WTC11 (cell line): ENCODE measurements at regions of chr12 and their contacts with region 1.

Region 1: DNA sequence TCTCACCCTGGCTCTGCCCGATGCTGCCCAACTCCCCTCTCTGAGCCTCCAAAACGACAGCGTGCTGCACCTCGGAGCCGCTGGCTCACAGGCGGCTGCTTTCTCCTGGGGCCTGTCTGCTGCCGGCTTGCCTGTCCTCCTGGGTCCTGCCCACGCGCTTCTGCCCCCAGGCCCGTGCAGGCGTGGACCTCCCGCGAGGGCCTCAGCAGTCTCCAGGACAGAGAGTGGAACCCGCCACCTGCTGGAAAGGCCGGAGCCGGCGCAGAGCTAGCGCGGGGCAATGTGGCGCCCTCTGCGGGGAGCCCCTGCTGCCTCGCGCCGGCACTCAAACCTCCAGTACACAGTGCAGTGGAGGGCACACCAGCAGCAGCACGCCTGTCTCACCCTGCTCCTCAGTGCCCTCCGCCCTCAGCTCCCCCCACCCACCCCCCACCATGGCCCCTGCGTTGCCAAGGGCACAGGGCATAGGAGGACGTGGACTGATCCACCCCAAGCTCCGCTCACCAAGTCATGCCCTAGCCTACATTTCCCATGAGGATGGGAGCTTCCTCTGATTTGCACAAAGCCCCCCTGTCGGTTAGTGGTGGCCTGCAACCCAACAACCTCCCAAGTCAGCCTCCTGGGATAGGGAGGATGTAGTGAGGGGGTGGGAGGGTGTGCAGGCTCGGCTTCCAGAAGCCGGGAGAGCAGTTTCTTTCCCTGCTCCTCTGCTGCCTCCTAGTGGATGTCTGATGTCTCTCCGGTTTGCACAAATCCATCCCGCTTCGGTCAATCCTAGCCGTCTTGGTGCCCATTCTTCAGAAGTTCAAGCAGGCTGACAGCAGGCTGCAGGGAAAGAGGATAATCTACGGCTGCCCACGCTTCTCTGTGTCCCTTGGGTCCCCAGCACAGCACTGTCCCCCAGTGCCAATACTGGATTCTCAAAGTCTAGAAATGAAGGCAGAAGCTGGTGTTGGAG is 25.2 kb downstream of the KRT8 start:
- DNase-seq: peak; percentile 86
- ATAC-seq: peak; percentile 80
- H3K4me3 Mint-ChIP-seq: peak overlapping the region; percentile 74
- H3K27ac Mint-ChIP-seq: 0 out of 2 replicates have a peak overlapping the region, but pooled peaks have one; percentile 60
- H3K4me1 Mint-ChIP-seq: peaks cover 14% of the 10 kb centered on the region
- H3K27me3 Mint-ChIP-seq: peaks cover 12% of the 10 kb centered on the region
- CTCF ChIP-seq: peak; percentile 86

Region 2: GRCh38 chr12:52156736-52157565 is 722.7 kb before region 1 on chr12:
- CTCF ChIA-PET with region 1: interaction called, 11 read pairs
- POLR2A ChIA-PET with region 1: no interaction called
- DNase-seq: peak; percentile 94
- ATAC-seq: peak; percentile 88
- H3K4me3 Mint-ChIP-seq: no peak overlapping the region
- H3K27ac Mint-ChIP-seq: no peak overlapping the region
- H3K4me1 Mint-ChIP-seq: no peaks in the 10 kb centered on the region
- H3K27me3 Mint-ChIP-seq: no peaks in the 10 kb centered on the region
- CTCF ChIP-seq: peak; percentile 97

Region 3: DNA sequence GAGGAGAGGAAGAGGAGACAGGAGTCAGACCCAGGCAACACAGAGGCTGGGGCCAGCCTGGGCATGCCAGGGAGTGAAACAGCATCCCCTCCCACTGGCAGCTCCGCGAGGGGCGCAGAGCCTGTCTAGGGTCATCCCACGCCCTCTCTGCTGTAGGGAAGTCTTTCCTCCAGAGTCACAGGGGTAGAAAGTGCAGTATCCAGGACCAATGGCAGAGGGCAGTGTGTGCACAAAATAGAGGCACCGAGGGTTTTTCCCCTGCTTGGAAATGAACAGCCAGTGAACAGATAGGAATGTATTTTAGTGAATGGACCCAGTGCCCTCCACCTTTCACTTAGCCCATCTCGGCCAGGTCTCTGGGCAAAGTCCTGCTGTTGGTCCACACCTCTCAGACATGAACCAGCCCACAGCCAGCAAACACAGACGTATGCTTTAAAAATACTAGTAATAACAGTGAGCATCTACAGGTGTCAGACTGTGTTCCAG is 296.7 kb before region 1 on chr12:
- CTCF ChIA-PET with region 1: interaction called, 47 read pairs
- POLR2A ChIA-PET with region 1: no interaction called
- DNase-seq: peak; percentile 74
- ATAC-seq: peak; percentile 97
- H3K4me3 Mint-ChIP-seq: no peak overlapping the region; the same call in 1 of the 2 replicates
- H3K27ac Mint-ChIP-seq: no peak overlapping the region
- H3K4me1 Mint-ChIP-seq: peaks cover 6% of the 10 kb centered on the region
- H3K27me3 Mint-ChIP-seq: no peaks in the 10 kb centered on the region
- CTCF ChIP-seq: no peak; the same call in none of the 2 replicates

Region 4: DNA sequence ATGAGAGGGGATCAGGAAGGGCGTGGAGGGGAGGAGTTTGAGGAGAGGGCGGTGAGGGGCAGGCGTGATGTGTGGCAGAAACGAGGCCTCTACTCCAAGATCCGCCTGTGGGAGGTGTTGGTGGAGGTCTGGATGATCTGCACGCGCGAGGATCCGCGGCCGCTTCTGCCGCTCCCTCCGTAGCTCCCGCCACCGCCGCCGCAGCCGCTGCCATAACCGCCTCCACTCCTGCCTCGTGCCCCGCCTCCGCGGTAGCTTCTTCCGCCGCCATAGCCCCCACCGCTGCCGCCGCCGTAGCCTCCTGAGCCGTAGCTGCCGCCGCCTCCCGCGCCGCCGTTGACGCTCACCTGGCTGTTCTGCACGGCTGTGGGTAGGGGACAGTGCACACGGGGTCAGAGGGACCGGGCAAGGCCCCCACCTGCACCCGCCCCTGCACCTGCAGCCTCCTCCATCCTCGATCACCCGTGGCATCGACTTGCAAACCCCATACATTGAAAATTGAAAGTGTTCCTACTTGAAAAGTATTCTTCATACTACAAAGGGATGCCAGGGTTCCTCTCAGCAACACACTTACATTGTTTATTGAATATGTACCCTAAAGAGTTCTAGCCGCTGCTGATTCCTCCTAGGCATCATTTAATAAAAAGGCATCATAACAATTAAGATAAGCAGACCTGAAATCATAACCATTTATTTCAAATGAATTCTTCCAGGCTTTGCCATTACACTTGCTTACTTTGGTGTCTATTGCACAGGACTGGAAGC is 188.4 kb before region 1 on chr12:
- CTCF ChIA-PET with region 1: interaction called, 38 read pairs
- POLR2A ChIA-PET with region 1: no interaction called
- DNase-seq: peak; percentile 63
- ATAC-seq: peak; percentile 65
- H3K4me3 Mint-ChIP-seq: peak overlapping the region; percentile 68
- H3K27ac Mint-ChIP-seq: no peak overlapping the region
- H3K4me1 Mint-ChIP-seq: peaks cover 14% of the 10 kb centered on the region
- H3K27me3 Mint-ChIP-seq: peaks cover 47% of the 10 kb centered on the region
- CTCF ChIP-seq: no peak

Region 5: DNA sequence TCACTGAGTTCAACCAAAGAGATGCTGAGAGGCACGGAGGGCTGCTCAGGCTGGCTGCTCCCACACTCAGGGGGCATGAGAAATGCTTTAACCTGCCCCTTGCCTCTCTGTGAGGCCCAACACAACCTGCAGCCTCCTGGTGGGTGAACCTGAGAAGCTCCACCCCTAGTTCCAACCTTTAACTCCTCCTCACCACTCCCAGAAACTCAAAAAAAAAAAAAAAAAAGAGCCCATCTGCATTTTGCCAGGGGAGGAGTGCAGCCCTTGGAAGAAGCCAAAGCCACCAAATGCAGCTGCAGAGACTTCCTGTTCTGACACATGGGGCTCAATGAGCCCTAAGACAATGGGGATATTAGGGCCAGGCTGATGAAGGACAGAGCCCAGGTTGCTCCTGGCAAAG is 74.7 kb before region 1 on chr12:
- CTCF ChIA-PET with region 1: interaction called, 19 read pairs
- POLR2A ChIA-PET with region 1: interaction called, 4 read pairs
- DNase-seq: peak; percentile 45
- ATAC-seq: peak; percentile 93
- H3K4me3 Mint-ChIP-seq: no peak overlapping the region
- H3K27ac Mint-ChIP-seq: peak overlapping the region; percentile 47; the same call in 1 of the 2 replicates
- H3K4me1 Mint-ChIP-seq: peaks cover 42% of the 10 kb centered on the region
- H3K27me3 Mint-ChIP-seq: peaks cover 2% of the 10 kb centered on the region; the same call in 1 of the 2 replicates
- CTCF ChIP-seq: no peak

Region 6: DNA sequence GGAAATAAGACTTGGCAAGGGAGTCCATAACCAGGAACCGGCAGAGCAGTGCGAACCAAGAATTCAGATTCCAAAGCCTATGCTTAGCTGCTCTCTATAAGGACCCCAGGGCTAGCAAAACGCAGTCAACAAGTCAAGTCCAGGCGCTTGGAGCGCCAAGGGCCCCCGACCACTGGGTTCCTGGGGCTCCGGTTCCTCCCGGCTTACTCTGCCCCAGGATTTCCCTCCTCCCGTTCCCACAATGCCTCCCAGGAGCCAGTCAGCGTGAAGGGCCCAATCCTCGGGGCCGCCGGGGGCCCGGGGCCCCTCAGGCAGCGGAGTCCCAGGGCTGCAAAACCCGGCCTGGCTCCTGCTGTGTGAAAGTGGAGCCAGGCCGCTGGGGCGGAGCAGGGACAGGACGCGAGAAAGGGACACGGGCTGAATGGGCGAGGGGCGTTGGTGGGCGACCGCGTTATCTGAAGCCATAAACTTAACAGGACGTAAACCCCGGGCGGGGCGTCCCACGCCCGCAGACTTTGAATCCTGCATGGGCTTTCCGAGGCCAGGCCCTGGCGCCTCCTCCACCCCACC is 23.7 kb after region 1 on chr12:
- CTCF ChIA-PET with region 1: interaction called, 48 read pairs
- POLR2A ChIA-PET with region 1: interaction called, 5 read pairs
- DNase-seq: peak; percentile 90
- ATAC-seq: peak; percentile 56
- H3K4me3 Mint-ChIP-seq: peak overlapping the region; percentile 92
- H3K27ac Mint-ChIP-seq: 0 out of 2 replicates have a peak overlapping the region, but pooled peaks have one; percentile 32
- H3K4me1 Mint-ChIP-seq: peaks cover 43% of the 10 kb centered on the region
- H3K27me3 Mint-ChIP-seq: no peaks in the 10 kb centered on the region
- CTCF ChIP-seq: no peak

Region 7: GRCh38 chr12:52980693-52981423 is 101.2 kb after region 1 on chr12:
- CTCF ChIA-PET with region 1: interaction called, 526 read pairs
- POLR2A ChIA-PET with region 1: no interaction called
- DNase-seq: peak; percentile 92
- ATAC-seq: peak; percentile 86
- H3K4me3 Mint-ChIP-seq: no peak overlapping the region
- H3K27ac Mint-ChIP-seq: no peak overlapping the region
- H3K4me1 Mint-ChIP-seq: peaks cover 13% of the 10 kb centered on the region
- H3K27me3 Mint-ChIP-seq: no peaks in the 10 kb centered on the region; the same call in 1 of the 2 replicates
- CTCF ChIP-seq: peak; percentile 97

Region 8: DNA sequence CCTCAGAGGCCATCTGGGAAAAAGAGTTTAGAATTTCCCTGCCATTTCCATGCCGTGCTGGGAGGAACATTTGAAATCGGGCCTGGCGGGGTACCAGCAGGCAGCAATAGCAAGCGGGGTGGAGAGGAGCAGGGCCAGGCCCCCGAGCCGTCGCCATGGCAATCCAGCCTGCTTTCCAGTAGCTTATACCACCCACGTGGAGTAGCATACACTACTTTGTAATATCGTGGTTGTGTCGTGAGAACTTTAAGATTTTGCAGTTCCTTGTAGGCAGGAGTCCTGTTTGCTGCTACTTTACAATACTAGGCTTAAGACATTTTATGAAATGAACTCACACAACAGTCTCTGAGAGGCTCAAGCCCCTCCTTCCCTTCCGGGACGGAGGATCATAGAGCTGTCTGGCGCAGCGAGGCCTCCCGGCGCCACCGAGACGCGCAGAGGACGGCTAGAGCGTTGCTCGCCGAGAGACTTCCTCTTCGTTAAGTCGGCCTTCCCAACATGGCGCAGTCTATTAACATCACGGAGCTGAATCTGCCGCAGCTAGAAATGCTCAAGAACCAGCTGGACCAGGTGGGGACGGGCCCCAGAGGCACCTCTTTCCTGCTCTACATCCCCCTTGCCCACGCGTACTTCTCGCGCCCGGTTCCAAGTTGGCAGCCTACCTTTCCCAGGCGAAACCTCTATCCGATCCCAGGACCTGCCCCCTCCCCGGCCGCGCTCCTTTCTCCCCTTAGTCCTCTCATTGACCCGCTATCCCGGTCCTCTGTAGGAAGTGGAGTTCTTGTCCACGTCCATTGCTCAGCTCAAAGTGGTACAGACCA is 415.6 kb after region 1 on chr12 and contains the start of gene PFDN5:
- CTCF ChIA-PET with region 1: no interaction called
- POLR2A ChIA-PET with region 1: no interaction called
- DNase-seq: peak; percentile 85
- ATAC-seq: peak; percentile 85
- H3K4me3 Mint-ChIP-seq: peak within 1 kb of the TSS; percentile 99
- H3K27ac Mint-ChIP-seq: peak within 1 kb of the TSS; percentile 96
- H3K4me1 Mint-ChIP-seq: peaks cover 18% of the 10 kb centered on the region
- H3K27me3 Mint-ChIP-seq: no peaks in the 10 kb centered on the region
- CTCF ChIP-seq: no peak
- total RNA-seq, gene PFDN5: 263 to 286 TPM (median 270 TPM) in 3 replicates